SK-N-SH (cell line): ENCODE measurements at regions of chr2 and their contacts with region 1.

Region 1: GRCh38 chr2:18520451-18521425 is 39.7 kb downstream of the RDH14 start:
- DNase-seq: peak; percentile 84
- H3K4me3 ChIP-seq: no peak overlapping the region; a peak in 1 of 4 replicates
- H3K27ac ChIP-seq: peak overlapping the region; percentile 57 to 67
- H3K4me1 ChIP-seq: peaks cover 27 to 33% of the 10 kb centered on the region in 2 experiments
- H3K27me3 ChIP-seq: no peaks in the 10 kb centered on the region
- CTCF ChIP-seq: peak; percentile 99
- EP300 ChIP-seq: peak in 1 of 2 experiments; percentile 39; a peak in 1 of 4 replicates
- RAD21 ChIP-seq: peak; percentile 100

Region 2: GRCh38 chr2:18506883-18507509 is 13.7 kb before region 1 on chr2:
- CTCF ChIA-PET with region 1: interaction called, 32 read pairs
- POLR2A ChIA-PET with region 1: no interaction called
- DNase-seq: no peak
- H3K4me3 ChIP-seq: no peak overlapping the region
- H3K27ac ChIP-seq: no peak overlapping the region
- H3K4me1 ChIP-seq: no peaks in the 10 kb centered on the region
- H3K27me3 ChIP-seq: no peaks in the 10 kb centered on the region
- CTCF ChIP-seq: no peak
- EP300 ChIP-seq: no peak
- RAD21 ChIP-seq: no peak

Region 3: GRCh38 chr2:18552351-18553077 is 31.8 kb after region 1 on chr2:
- CTCF ChIA-PET with region 1: interaction called, 31 read pairs
- POLR2A ChIA-PET with region 1: no interaction called
- DNase-seq: no peak
- H3K4me3 ChIP-seq: no peak overlapping the region
- H3K27ac ChIP-seq: peak overlapping the region; percentile 66 to 76
- H3K4me1 ChIP-seq: peaks cover 8 to 37% of the 10 kb centered on the region in 2 experiments; a peak in 3 of 4 replicates
- H3K27me3 ChIP-seq: no peaks in the 10 kb centered on the region
- CTCF ChIP-seq: no peak
- EP300 ChIP-seq: no peak
- RAD21 ChIP-seq: no peak

Region 4: GRCh38 chr2:18611184-18611583 is 90.4 kb after region 1 on chr2:
- CTCF ChIA-PET with region 1: interaction called, 19 read pairs
- POLR2A ChIA-PET with region 1: no interaction called
- DNase-seq: no peak
- H3K4me3 ChIP-seq: no peak overlapping the region
- H3K27ac ChIP-seq: no peak overlapping the region
- H3K4me1 ChIP-seq: peaks cover 7 to 17% of the 10 kb centered on the region in 2 experiments; a peak in 3 of 4 replicates
- H3K27me3 ChIP-seq: no peaks in the 10 kb centered on the region
- CTCF ChIP-seq: no peak
- EP300 ChIP-seq: no peak
- RAD21 ChIP-seq: no peak

Region 5: GRCh38 chr2:18749912-18750526 is 229.3 kb after region 1 on chr2:
- CTCF ChIA-PET with region 1: interaction called, 107 read pairs
- POLR2A ChIA-PET with region 1: no interaction called
- DNase-seq: peak; percentile 35
- H3K4me3 ChIP-seq: no peak overlapping the region
- H3K27ac ChIP-seq: peak overlapping the region in 1 of 2 experiments; percentile 19; a peak in 1 of 4 replicates
- H3K4me1 ChIP-seq: peaks cover 0 to 23% of the 10 kb centered on the region in 2 experiments; a peak in 2 of 4 replicates
- H3K27me3 ChIP-seq: no peaks in the 10 kb centered on the region
- CTCF ChIP-seq: peak; percentile 97
- EP300 ChIP-seq: no peak
- RAD21 ChIP-seq: peak; percentile 98

Region 6: DNA sequence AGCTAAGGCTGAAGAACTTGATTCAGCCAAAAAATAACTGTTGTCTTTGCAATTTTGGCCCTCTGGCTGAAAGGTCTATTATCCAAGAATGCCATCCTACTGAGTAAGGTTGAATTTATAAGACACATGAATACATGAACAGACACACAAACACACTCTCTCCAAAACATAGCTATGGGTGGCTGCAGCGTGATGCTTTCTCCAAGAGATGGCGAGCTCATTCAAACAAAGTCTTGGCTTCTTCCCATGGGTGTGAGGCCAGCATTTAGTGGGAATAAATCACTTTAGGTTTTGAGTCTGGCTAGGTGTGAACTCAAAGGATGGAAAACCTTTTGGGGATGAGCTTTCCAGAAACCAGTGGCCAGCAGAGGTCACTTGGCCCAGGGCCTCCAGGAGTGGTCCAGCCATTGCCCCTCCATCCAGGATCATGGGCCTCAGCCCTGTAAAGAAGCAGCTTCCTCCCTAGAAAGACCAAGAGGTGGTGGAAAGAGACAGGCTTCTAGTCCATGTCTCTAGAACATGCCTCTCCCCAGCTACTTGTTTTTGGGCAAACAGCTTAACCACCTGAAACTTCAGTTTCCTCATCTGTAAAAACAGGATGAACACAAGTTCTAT is 848.7 kb after region 1 on chr2:
- CTCF ChIA-PET with region 1: interaction called, 22 read pairs
- POLR2A ChIA-PET with region 1: no interaction called
- DNase-seq: no peak
- H3K4me3 ChIP-seq: no peak overlapping the region
- H3K27ac ChIP-seq: no peak overlapping the region
- H3K4me1 ChIP-seq: no peaks in the 10 kb centered on the region; a peak in 1 of 4 replicates
- H3K27me3 ChIP-seq: peaks cover 15% of the 10 kb centered on the region; the same call in 1 of the 2 replicates
- CTCF ChIP-seq: peak; percentile 59
- EP300 ChIP-seq: no peak
- RAD21 ChIP-seq: peak; percentile 43